ENCODE measurements at regions of chr18 and their contacts with region 1.

Region 1: DNA sequence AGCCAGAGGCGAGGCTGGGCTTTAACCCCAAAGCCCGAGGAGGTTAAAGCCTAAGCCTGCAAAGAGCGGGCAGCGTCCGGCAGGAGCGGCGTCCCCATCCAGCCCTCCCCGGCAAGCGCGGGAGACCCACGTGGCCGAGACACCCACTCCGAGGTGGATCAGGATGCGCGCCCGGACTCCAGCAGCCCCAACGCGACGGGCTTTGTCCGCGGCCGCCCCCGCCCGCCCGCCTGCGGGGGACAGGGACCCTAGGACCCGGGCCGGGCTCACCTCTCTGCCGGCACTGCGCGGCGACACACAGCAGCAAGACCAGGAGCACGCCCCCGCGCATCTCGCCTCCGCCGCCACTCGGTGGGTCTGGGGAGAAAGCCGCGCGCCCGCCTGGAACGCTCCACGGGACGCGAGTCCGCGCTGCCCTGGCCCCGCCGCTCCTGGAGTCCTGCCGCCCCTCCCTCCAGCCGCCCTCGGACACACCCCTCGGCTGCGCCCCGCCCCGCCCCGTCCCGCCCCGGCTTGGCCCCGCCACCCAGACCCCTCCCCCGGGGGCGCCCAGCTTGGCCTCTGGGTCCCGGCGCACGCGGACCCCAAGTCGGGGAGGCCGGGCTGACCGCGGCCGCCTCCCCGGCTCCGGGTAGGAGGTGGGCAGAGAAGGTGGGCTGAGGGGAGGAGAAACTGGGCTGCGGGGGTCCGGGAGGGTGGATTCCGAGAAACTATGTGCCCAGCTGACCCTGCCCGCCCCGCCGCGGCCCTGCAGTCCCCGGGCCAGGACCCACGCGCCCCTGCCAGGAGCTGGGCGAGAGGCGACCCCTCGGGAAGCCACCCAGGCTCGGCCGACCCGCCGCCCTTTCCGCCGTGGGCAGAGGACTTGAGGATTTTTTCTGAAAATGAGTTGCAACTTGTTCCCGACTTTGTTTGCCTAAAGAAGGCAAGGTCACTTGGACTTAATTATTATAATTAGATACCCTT is at the start of gene LAMA1:
- DNase-seq: no peak
- H3K4me3 ChIP-seq: peak within 1 kb of the TSS; percentile 52 to 67
- H3K27ac ChIP-seq: no peak within 1 kb of the TSS
- H3K4me1 ChIP-seq: peaks cover 14 to 18% of the 10 kb centered on the region in 2 donors
- H3K27me3 ChIP-seq: peaks cover 12% of the 10 kb centered on the region
- CTCF ChIP-seq: no peak
- total RNA-seq, gene LAMA1: not detected

Region 2: DNA sequence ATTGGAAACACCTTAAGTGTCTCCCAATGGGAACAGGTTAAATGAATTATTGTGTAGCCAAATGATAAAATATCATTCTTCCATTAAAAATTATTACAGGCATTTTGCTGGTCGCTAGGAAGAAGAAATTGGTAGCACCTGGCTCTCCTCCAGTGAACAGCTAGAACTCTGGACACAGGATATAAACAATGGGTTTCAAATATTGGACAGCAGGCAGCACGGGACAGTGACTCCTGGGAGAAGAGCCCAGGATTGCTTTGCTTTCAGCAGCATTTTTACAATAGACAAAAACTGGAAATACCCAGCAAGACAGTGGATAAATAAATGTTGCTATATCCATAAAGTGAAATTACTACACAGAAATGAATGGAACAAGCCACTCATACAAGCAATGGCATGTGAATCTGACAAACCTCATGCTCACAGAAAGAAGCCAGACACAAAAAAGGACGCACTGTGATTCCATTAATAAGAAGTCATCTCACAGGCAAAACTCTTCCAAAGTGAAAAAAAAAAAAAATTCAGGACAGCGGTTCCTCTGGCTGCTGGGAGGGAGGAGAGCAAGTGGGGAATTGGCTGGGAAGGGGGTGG is 50.6 kb before region 1 on chr18:
- intact Hi-C with region 1: loop called (anchors 10 kb)
- DNase-seq: no peak
- H3K4me3 ChIP-seq: no peak overlapping the region
- H3K27ac ChIP-seq: no peak overlapping the region
- H3K4me1 ChIP-seq: no peaks in the 10 kb centered on the region
- H3K27me3 ChIP-seq: no peaks in the 10 kb centered on the region
- CTCF ChIP-seq: no peak